Endothelial cell of umbilical vein (primary cell): ENCODE measurements at regions of chr11 and their contacts with region 1.

Region 1: DNA sequence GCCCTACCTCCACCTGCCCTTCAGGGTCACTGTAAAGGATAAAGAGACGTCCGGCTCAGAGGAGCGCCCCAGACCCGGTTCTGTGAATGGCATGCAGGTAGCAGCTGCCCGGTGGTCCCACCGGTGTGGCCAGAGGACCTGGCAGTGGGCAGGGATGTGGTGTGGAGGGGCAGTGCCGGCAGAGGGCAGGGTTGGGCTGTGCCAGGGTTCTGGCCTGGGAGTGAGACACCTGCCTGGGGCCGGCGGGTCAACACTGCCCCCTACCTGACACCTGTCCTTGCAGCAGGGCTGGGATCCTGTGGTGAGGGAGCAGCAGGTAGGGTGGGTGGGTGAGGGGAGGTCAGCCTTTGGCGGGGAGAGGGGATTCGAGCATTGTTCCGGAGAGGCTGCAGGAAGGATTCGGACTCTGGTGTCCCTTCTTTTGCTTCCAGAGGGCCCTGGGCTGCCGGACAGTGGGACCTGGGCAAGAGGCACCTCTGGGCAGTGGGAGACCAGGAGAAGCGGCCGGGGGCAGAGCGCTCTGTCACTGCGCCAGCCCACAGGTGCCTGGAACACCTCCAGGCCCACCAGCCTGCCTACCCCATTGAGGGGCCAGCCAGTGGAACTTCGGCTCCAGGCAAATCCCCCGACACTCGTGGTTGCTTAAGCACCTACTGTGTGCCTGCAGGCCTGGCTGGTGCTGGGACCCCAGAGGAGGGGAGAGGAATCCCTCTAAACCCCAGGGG is 1.6 kb upstream of the PHLDA2 start:
- DNase-seq: peak; percentile 68
- H3K4me3 ChIP-seq: peak overlapping the region in 2 of 3 experiments; percentile 21 to 37
- H3K27ac ChIP-seq: peak overlapping the region; percentile 78
- H3K4me1 ChIP-seq: peaks cover 26% of the 10 kb centered on the region
- H3K27me3 ChIP-seq: no peaks in the 10 kb centered on the region
- CTCF ChIP-seq: peak; percentile 39 to 82
- POLR2A ChIP-seq: no peak

Region 2: DNA sequence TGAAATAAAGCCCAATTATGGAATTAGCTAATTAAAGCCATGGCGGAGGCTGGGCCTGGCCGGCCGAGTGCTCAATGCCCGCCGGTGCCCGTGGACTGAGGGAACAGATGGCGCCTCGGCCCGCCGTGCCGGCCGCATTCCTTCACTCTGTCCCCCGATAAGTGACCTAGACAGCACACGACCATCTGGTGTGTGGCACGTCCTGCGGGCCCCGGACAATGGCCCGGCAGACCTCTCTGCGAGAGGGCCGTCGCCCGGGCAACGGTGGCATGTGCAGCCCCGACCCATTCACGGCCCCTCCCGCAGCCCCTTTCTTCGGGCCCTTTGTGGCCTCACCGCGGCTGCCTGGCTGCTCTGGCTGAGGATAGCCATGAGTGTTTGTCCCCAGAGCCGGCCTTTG is 80.5 kb before region 1 on chr11:
- CTCF ChIA-PET with region 1: no interaction called
- POLR2A ChIA-PET with region 1: no interaction called
- dilution Hi-C with region 1: no loop called
- intact Hi-C with region 1: no loop called
- DNase-seq: no peak
- H3K4me3 ChIP-seq: no peak overlapping the region
- H3K27ac ChIP-seq: no peak overlapping the region
- H3K4me1 ChIP-seq: no peaks in the 10 kb centered on the region
- H3K27me3 ChIP-seq: no peaks in the 10 kb centered on the region
- CTCF ChIP-seq: no peak
- POLR2A ChIP-seq: no peak

Region 3: GRCh38 chr11:2892215-2893020 is 38.4 kb before region 1 on chr11:
- CTCF ChIA-PET with region 1: interaction called, 46 read pairs
- POLR2A ChIA-PET with region 1: interaction called, 13 read pairs
- dilution Hi-C with region 1: no loop called
- intact Hi-C with region 1: loop called (anchors 1 kb)
- DNase-seq: peak; percentile 64
- H3K4me3 ChIP-seq: peak overlapping the region in 2 of 3 experiments; percentile 29 to 36
- H3K27ac ChIP-seq: peak overlapping the region; percentile 43
- H3K4me1 ChIP-seq: peaks cover 14% of the 10 kb centered on the region
- H3K27me3 ChIP-seq: no peaks in the 10 kb centered on the region
- CTCF ChIP-seq: peak; percentile 95 to 98
- POLR2A ChIP-seq: peak; percentile 79

Region 4: DNA sequence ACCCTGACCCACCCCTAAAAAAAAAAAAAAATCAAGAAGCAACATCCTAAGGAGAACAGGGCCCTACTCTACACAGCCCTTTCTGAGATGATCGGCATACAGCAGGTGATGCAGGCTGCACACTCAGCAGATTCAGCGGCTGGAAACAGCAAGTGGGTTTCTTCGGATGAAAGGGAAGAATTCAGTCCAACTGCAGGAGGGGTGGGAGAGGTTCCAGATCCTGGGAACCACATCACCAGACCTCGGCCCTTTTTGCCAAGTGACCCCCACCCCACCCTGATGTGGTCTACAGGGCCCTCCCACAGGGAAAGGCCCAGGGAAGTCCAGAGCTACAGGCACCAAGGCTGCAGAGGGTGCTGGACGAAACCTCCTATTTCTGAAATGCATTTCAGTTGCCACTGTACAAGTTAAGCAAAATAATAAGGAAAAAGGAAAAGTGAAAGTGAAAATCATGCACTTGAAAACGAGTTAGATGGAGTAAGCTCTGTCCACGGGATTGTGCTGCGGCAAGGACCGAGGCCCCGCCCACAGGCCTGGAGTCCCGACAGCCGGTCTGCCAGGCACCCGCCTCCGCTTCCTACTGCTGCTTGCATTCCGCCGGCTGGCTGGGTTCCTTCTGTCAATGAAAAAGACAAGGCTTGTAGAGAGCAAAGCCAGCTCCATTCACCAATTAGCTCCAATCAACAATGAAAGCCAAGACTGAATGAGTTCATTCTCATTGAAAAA is 14.3 kb after region 1 on chr11:
- CTCF ChIA-PET with region 1: interaction called, 12 read pairs
- POLR2A ChIA-PET with region 1: interaction called, 8 read pairs
- dilution Hi-C with region 1: no loop called
- intact Hi-C with region 1: loop called (anchors 1 kb)
- DNase-seq: peak; percentile 83
- H3K4me3 ChIP-seq: no peak overlapping the region
- H3K27ac ChIP-seq: no peak overlapping the region
- H3K4me1 ChIP-seq: peaks cover 11% of the 10 kb centered on the region
- H3K27me3 ChIP-seq: no peaks in the 10 kb centered on the region
- CTCF ChIP-seq: no peak
- POLR2A ChIP-seq: no peak

Region 5: GRCh38 chr11:3021125-3021524 is 90.3 kb after region 1 on chr11:
- CTCF ChIA-PET with region 1: interaction called, 8 read pairs
- POLR2A ChIA-PET with region 1: no interaction called
- dilution Hi-C with region 1: no loop called
- intact Hi-C with region 1: loop called (anchors 1 kb)
- DNase-seq: peak; percentile 56
- H3K4me3 ChIP-seq: no peak overlapping the region
- H3K27ac ChIP-seq: no peak overlapping the region
- H3K4me1 ChIP-seq: peaks cover 5% of the 10 kb centered on the region
- H3K27me3 ChIP-seq: no peaks in the 10 kb centered on the region
- CTCF ChIP-seq: peak; percentile 47 to 71
- POLR2A ChIP-seq: no peak

Region 6: DNA sequence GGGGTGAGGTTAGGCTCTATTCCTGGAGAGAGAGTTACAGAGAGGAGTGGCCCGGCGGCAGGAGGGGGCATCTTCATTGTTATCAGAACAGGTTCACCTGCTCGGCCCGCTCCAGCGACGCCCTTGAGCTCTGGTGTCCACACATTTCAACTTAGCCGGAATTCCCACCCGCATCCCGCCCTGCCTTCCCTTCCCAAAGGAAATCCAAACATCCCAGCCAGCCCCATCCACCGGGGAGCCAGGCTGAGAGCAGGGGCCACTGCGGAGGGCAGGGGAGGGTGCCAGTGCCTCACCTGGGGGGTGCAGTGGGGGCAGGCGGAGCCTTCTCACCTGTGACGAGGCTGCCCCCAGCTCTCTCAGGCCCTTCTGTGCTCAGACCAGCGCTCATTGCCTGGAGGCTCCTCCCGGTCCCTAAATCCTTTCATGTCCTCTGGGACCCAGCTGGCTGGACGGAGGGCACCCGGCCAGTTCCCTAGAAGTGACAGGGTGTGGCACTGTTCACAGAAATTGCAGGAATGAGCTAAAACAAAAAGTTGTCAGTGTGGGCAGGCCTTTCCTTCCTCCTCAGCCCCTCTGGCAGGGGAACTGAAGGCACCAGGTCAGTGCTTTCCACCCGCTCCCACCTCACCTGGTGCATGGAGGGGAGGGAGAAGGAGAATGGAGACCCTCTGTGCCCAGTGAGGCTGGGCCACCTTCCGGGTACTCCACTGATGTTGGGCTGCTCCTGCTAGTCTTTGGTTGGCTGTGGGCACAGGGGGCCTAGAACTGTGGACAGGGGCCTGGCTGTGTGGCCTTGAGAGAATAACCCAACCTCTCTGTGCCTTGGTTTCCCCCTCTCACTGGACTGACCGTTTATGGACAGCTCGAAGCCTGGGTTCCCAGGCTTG is 289.9 kb after region 1 on chr11:
- CTCF ChIA-PET with region 1: no interaction called
- POLR2A ChIA-PET with region 1: no interaction called
- dilution Hi-C with region 1: no loop called
- intact Hi-C with region 1: loop called (anchors 5 kb)
- DNase-seq: no peak
- H3K4me3 ChIP-seq: no peak overlapping the region
- H3K27ac ChIP-seq: no peak overlapping the region
- H3K4me1 ChIP-seq: no peaks in the 10 kb centered on the region
- H3K27me3 ChIP-seq: no peaks in the 10 kb centered on the region
- CTCF ChIP-seq: no peak
- POLR2A ChIP-seq: no peak